ENCODE measurements at regions of chr17 and their contacts with region 1.

Region 1: GRCh38 chr17:29389982-29390850 is at the start of gene TAOK1:
- ATAC-seq: peak; percentile 93 to 97 (median 94)
- H3K4me3 ChIP-seq: peak within 1 kb of the TSS; percentile 65 to 90 (median 74)
- H3K27ac ChIP-seq: peak within 1 kb of the TSS; percentile 95 to 98
- H3K4me1 ChIP-seq: peaks cover 0 to 22% of the 10 kb centered on the region in 2 donors
- total RNA-seq, gene TAOK1: 31.1 to 77.9 (median 49.9) TPM

Region 2: DNA sequence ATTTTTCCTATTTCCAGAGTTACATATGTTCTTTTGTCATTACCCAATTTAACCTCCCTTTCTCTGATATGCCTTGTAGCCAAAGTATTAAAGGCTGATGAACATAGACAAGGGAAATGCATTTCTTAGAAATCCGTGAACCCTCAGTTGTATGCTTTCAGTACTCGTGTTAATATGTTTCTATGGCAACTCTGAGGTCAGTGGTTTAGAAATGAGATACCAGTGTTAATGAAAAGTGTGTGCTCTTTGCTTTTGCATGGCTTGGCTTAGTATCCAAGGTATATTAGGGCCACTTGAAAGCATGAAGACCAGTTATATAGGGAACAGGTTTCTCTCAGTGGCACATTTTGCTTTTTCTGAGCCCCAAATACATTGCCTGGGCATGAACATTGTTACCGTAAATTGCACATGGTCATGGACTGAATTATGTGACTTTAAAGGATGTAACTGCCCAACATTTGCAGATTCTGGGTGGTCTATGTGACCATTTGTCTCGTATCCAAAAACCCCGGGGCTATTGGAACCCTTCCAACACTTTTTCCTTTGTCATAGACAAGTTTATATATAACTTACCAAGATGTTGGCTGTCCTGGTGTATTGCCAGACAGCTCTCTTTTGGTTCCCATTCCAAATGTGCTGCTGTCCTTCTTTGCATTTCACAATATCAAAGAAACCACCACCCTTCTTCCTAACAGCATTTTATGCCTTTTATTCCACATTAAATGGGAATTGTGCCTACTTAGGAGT is 159.1 kb after region 1 on chr17:
- in situ Hi-C with region 1: loop called in 4 of 9 experiments (anchors 25 kb)
- ATAC-seq: peak in 4 of 8 experiments; percentile 48 to 83 (median 62)
- H3K4me3 ChIP-seq: no peak overlapping the region
- H3K27ac ChIP-seq: no peak overlapping the region
- H3K4me1 ChIP-seq: peaks cover 0 to 14% of the 10 kb centered on the region in 2 donors

Region 3: DNA sequence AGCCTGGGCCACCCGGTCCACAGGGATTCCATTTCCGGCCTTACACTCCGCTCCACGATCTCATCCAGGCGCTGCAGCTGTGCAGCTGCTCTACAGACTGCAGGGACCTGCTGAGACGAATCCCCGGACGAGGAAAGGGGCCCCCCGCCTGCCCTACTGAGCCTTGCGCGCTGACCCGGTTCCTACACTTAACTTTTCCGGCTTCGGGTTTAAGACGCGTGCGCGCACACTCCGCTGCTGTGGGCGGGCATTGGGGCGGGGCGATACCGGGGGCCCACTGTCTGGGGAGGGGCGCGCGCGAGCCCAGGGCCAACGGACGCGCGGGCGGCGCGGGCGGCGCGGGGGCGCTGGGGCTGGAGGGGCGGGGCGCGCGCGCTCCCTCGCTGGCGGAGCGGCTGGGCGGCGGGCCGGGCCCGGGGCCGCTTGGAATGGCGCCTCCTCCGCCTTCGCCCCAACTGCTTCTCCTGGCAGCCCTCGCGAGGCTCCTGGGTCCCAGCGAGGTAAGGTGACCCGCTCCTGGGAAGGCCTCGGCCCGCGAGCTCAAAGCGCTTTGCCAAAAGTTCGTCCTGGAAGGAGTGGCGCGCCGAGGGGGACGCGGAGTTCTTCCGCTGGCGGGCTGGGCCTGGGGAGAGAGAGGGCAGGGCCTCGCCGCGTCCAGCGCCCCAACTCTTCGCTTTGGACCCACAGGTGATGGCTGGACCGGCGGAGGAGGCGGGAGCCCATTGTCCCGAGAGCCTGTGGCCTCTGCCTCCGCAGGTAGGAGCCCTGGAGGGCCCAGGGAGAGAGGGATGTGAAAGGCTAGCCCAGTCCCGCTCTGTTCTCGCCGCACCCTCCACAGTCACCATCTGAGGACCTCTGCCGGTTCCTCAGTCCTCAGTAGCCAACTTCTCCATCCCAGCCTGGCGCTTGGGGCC is 178.4 kb after region 1 on chr17 and contains the start of gene TP53I13:
- in situ Hi-C with region 1: loop called in 2 of 9 experiments (anchors 25 kb)
- ATAC-seq: peak; percentile 26 to 62 (median 51)
- H3K4me3 ChIP-seq: peak within 1 kb of the TSS; percentile 49 to 87 (median 61)
- H3K27ac ChIP-seq: peak within 1 kb of the TSS in 1 of 2 donors; percentile 60
- H3K4me1 ChIP-seq: peaks cover 17 to 23% of the 10 kb centered on the region in 2 donors
- total RNA-seq, gene TP53I13: 13.0 to 39.6 (median 20.8) TPM